IMR-90 (cell line): ENCODE measurements at regions of chr5 and their contacts with region 1.

Region 1: DNA sequence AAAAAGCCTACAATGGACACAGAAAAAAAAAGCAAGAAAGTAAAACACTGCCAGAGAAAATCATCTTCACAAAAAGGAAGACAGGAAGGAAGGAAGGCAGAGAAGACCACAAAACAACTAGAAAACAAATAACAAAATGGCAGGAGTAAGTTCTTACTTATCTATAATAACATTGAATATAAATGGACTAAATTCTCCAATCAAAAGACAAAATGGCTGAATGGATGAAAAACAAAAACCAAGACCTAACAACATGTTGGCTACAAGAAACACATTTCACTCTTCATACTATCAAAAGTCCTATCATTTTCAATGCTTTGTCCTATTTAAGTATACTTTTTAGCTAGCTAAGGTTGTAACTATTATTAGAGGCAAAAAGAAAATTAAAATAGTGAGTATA is 36.9 kb upstream of the HMGCR start:
- DNase-seq: no peak
- ATAC-seq: no peak
- H3K4me3 ChIP-seq: no peak overlapping the region
- H3K27ac ChIP-seq: no peak overlapping the region
- H3K4me1 ChIP-seq: no peaks in the 10 kb centered on the region
- H3K27me3 ChIP-seq: peaks cover 3% of the 10 kb centered on the region; the same call in 1 of the 2 replicates
- CTCF ChIP-seq: no peak
- POLR2A ChIP-seq: no peak
- RAD21 ChIP-seq: no peak

Region 2: DNA sequence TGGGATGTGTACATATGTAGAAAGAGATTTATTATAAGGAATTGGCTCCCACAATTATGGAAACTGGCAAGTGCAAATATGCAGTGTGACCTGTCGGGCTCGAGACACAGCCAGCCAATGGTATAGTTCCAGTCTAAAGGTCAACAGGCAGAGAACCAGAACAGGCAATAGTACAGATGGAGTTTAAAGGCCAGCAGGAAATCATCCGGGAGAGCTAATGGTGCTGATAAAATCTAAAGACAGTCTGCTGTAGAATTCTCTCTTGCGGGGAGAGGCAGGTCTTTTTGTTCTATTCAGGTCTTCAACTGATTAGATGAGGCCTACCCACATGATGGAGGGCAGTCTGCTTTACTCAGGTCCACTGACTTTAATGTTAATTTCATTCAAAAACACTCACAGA is 85.2 kb before region 1 on chr5:
- CTCF ChIA-PET with region 1: no interaction called
- POLR2A ChIA-PET with region 1: no interaction called
- dilution Hi-C with region 1: no loop called
- in situ Hi-C with region 1: no loop called
- intact Hi-C with region 1: no loop called
- DNase-seq: no peak
- ATAC-seq: no peak
- H3K4me3 ChIP-seq: no peak overlapping the region
- H3K27ac ChIP-seq: no peak overlapping the region
- H3K4me1 ChIP-seq: no peaks in the 10 kb centered on the region
- H3K27me3 ChIP-seq: no peaks in the 10 kb centered on the region
- CTCF ChIP-seq: no peak
- POLR2A ChIP-seq: no peak
- RAD21 ChIP-seq: no peak

Region 3: GRCh38 chr5:75331095-75332090 is 31.3 kb after region 1 on chr5:
- CTCF ChIA-PET with region 1: interaction called, 3 read pairs
- POLR2A ChIA-PET with region 1: interaction called, 14 read pairs
- dilution Hi-C with region 1: no loop called
- in situ Hi-C with region 1: no loop called
- intact Hi-C with region 1: no loop called
- DNase-seq: no peak
- ATAC-seq: no peak
- H3K4me3 ChIP-seq: no peak overlapping the region
- H3K27ac ChIP-seq: no peak overlapping the region
- H3K4me1 ChIP-seq: no peaks in the 10 kb centered on the region
- H3K27me3 ChIP-seq: no peaks in the 10 kb centered on the region; the same call in 1 of the 2 replicates
- CTCF ChIP-seq: no peak
- POLR2A ChIP-seq: no peak
- RAD21 ChIP-seq: no peak